ENCODE measurements at regions of chr19 and their contacts with region 1.

Region 1: GRCh38 chr19:38769635-38770211 is 3.6 kb downstream of the LGALS7 start:
- DNase-seq: peak; percentile 91
- ATAC-seq: peak; percentile 90
- H3K4me3 Mint-ChIP-seq: peak overlapping the region; percentile 28
- H3K27ac Mint-ChIP-seq: peak overlapping the region; percentile 56
- H3K4me1 Mint-ChIP-seq: peaks cover 8% of the 10 kb centered on the region
- H3K27me3 Mint-ChIP-seq: no peaks in the 10 kb centered on the region

Region 2: GRCh38 chr19:38736036-38736412 is 33.7 kb before region 1 on chr19:
- CTCF ChIA-PET with region 1: interaction called, 11 read pairs
- DNase-seq: peak; percentile 77
- ATAC-seq: peak; percentile 57
- H3K4me3 Mint-ChIP-seq: peak overlapping the region; percentile 61
- H3K27ac Mint-ChIP-seq: peak overlapping the region; percentile 46
- H3K4me1 Mint-ChIP-seq: peaks cover 55% of the 10 kb centered on the region
- H3K27me3 Mint-ChIP-seq: peaks cover 4% of the 10 kb centered on the region

Region 3: DNA sequence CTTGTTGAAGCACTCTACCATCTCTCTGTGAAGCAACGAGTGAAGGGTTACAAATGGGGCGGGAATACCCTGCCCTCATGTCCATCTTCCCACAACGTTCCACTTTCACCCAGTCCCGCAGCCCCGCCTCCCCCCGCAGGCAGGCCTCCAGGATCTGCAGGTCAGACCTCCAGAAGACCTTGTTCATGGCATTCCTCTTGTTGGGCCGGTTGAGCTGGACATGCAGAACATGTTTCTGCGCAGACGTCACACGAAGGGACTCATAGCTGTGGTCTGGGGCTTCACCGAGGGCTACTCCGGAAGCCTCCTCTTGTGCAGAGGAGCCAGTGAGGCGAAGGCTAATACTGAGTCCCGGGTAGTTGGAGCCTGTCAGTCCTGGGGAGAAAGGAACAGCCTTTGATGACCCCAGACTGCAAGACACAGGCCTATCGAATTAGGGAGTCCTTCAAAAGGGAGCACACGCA is 61.5 kb after region 1 on chr19:
- CTCF ChIA-PET with region 1: interaction called, 12 read pairs
- DNase-seq: peak; percentile 75
- ATAC-seq: peak; percentile 41
- H3K4me3 Mint-ChIP-seq: peak overlapping the region; percentile 93
- H3K27ac Mint-ChIP-seq: peak overlapping the region; percentile 95
- H3K4me1 Mint-ChIP-seq: peaks cover 22% of the 10 kb centered on the region
- H3K27me3 Mint-ChIP-seq: no peaks in the 10 kb centered on the region

Region 4: DNA sequence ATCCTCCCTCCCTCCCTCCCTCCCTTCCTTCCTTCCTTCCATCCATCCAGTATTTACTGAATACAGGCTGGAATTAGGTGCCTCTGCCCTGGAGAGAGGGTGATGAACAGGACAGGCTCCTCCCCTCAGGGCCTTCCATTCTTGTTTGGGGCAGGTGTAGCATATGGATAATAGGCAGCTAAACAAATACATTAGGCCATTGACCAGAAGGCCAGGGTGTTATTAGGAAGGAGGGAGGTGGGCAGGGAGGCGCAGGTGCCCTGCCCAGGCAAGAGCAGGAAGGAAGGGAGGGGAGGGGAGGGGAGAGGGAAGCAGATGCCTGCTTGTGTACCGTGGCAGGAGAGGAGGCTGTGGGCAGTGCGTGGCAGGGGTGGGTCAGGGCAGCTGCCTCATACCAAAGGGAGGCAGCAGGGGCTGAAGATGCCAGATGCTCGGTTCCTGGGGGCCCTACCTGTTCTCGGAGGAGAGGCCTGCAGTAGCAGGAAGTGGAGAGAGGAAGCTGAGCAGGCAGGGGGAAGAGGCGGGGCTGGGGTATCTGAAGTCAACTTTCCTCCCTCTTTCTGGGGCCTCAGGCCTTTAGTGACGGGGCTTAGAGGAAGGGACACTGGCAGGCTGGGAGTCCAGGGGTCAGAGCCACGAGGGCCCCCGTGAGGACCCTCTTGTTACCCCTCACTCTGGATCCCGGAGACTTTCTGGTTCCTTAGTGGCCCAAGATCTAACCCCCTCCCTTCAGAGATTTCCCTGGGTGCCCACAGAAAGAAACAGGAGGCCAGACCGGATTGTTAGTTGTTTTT is 108.3 kb after region 1 on chr19 and contains the start of gene RINL:
- CTCF ChIA-PET with region 1: interaction called, 12 read pairs
- DNase-seq: peak; percentile 85
- ATAC-seq: peak; percentile 93
- H3K4me3 Mint-ChIP-seq: peak within 1 kb of the TSS; percentile 91
- H3K27ac Mint-ChIP-seq: peak within 1 kb of the TSS; percentile 98
- H3K4me1 Mint-ChIP-seq: peaks cover 35% of the 10 kb centered on the region
- H3K27me3 Mint-ChIP-seq: no peaks in the 10 kb centered on the region
- total RNA-seq, gene RINL: 80.1 to 81.0 TPM